ENCODE measurements at regions of chr3 and their contacts with region 1.

Region 1: DNA sequence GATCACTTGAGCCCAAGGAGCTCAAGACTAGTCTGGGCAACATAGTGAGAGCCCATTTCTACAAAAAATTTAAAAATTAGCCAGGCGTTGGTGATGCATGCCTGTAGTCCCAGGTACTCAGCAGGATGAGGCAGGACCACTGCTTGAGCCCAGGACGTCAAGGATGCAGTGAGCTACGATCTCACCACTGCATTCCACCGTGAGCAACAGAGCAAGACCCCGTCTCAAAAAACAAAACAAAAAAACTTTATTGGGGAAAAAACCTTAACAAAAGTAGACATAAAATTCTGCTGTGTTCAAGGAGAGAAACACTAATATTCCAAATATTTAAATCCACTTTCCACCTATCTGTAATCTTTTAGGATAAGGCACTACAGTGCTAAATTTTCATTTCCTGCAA is 20.8 kb downstream of the SETD2 start:
- DNase-seq: no peak
- H3K4me3 ChIP-seq: no peak overlapping the region
- H3K27ac ChIP-seq: no peak overlapping the region
- H3K4me1 ChIP-seq: no peaks in the 10 kb centered on the region
- H3K27me3 ChIP-seq: no peaks in the 10 kb centered on the region
- CTCF ChIP-seq: no peak

Region 2: GRCh38 chr3:47225310-47225906 is 82.3 kb after region 1 on chr3:
- CTCF ChIA-PET with region 1: interaction called, 12 read pairs
- POLR2A ChIA-PET with region 1: no interaction called
- intact Hi-C with region 1: no loop called
- DNase-seq: no peak
- H3K4me3 ChIP-seq: no peak overlapping the region
- H3K27ac ChIP-seq: no peak overlapping the region
- H3K4me1 ChIP-seq: no peaks in the 10 kb centered on the region
- H3K27me3 ChIP-seq: no peaks in the 10 kb centered on the region
- CTCF ChIP-seq: no peak

Measured in PC-9 (cell line).